BJ (cell line): ENCODE measurements at regions of chr14 and their contacts with region 1.

Region 1: DNA sequence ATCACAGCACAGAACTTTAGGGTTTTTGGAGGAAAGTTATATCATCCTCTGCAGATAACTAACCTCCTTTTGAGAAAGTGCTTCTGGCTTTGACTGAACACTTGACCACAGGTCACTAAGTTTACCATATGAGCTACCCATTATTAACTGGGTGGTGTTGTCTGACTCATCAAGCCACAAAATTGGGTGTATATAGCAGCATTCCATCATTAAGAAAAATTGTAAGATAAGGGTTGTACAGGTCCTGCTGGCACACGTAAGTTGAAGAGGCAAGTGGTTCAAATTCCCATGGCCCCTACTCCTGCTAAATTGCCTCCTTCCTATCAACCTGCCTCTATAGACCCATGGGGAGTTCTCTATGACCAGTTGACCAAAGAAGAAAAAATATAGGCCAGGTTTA is 39.5 kb downstream of the L2HGDH start:
- DNase-seq: no peak
- H3K4me3 ChIP-seq: no peak overlapping the region
- H3K27me3 ChIP-seq: no peaks in the 10 kb centered on the region
- CTCF ChIP-seq: no peak

Region 2: GRCh38 chr14:50156111-50156510 is 116.4 kb before region 1 on chr14:
- CTCF ChIA-PET with region 1: no interaction called
- POLR2A ChIA-PET with region 1: interaction called, 14 read pairs
- DNase-seq: no peak
- H3K4me3 ChIP-seq: no peak overlapping the region
- H3K27me3 ChIP-seq: no peaks in the 10 kb centered on the region
- CTCF ChIP-seq: no peak